Activated CD8-positive, alpha-beta T cell treated with anti-CD3 and anti-CD28 coated beads for 36 hours (primary cell): ENCODE measurements at regions of chr6 and their contacts with region 1.

Region 1: GRCh38 chr6:71349395-71349794 is 60.8 kb downstream of the OGFRL1 start:
- DNase-seq: no peak
- ATAC-seq: no peak
- H3K4me3 Mint-ChIP-seq: no peak overlapping the region
- H3K27ac Mint-ChIP-seq: no peak overlapping the region
- H3K4me1 Mint-ChIP-seq: no peaks in the 10 kb centered on the region
- H3K27me3 Mint-ChIP-seq: peaks cover 3% of the 10 kb centered on the region
- CTCF ChIP-seq: peak; percentile 79

Region 2: GRCh38 chr6:71012866-71013469 is 336.4 kb before region 1 on chr6:
- CTCF ChIA-PET with region 1: no interaction called
- POLR2A ChIA-PET with region 1: no interaction called
- intact Hi-C with region 1: loop called (anchors 5 kb)
- DNase-seq: peak; percentile 15
- ATAC-seq: peak; percentile 51
- H3K4me3 Mint-ChIP-seq: no peak overlapping the region
- H3K27ac Mint-ChIP-seq: no peak overlapping the region
- H3K4me1 Mint-ChIP-seq: no peaks in the 10 kb centered on the region
- H3K27me3 Mint-ChIP-seq: peaks cover 10% of the 10 kb centered on the region
- CTCF ChIP-seq: peak; percentile 76

Region 3: GRCh38 chr6:71190809-71191208 is 158.6 kb before region 1 on chr6:
- CTCF ChIA-PET with region 1: interaction called, 18 read pairs
- POLR2A ChIA-PET with region 1: no interaction called
- intact Hi-C with region 1: loop called (anchors 2 kb)
- DNase-seq: no peak
- ATAC-seq: no peak
- H3K4me3 Mint-ChIP-seq: no peak overlapping the region
- H3K27ac Mint-ChIP-seq: no peak overlapping the region
- H3K4me1 Mint-ChIP-seq: no peaks in the 10 kb centered on the region
- H3K27me3 Mint-ChIP-seq: no peaks in the 10 kb centered on the region
- CTCF ChIP-seq: peak; percentile 47

Region 4: DNA sequence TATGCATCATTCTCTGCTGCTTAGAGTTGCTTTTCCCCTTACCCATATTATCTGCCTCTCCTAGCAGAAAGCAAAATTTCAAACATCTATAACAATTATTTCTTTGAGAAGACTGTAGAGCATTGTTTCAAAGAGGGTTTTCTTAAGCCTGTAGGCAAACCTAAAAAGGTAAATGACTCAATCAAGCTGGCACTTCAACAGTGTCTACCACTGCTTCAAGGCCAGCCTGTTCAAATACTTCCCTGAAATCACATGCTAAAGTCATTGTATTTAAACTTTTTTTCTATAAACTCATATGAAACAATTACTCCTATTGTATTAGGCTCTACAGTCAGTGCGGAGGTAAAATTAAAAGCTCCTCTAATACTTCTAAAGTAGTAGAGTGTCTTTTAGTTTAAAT is 26.3 kb after region 1 on chr6:
- CTCF ChIA-PET with region 1: no interaction called
- POLR2A ChIA-PET with region 1: no interaction called
- intact Hi-C with region 1: no loop called
- DNase-seq: no peak
- ATAC-seq: no peak
- H3K4me3 Mint-ChIP-seq: no peak overlapping the region
- H3K27ac Mint-ChIP-seq: no peak overlapping the region
- H3K4me1 Mint-ChIP-seq: no peaks in the 10 kb centered on the region
- H3K27me3 Mint-ChIP-seq: peaks cover 8% of the 10 kb centered on the region
- CTCF ChIP-seq: no peak